ENCODE measurements at regions of chr6 and their contacts with region 1.

Region 1: DNA sequence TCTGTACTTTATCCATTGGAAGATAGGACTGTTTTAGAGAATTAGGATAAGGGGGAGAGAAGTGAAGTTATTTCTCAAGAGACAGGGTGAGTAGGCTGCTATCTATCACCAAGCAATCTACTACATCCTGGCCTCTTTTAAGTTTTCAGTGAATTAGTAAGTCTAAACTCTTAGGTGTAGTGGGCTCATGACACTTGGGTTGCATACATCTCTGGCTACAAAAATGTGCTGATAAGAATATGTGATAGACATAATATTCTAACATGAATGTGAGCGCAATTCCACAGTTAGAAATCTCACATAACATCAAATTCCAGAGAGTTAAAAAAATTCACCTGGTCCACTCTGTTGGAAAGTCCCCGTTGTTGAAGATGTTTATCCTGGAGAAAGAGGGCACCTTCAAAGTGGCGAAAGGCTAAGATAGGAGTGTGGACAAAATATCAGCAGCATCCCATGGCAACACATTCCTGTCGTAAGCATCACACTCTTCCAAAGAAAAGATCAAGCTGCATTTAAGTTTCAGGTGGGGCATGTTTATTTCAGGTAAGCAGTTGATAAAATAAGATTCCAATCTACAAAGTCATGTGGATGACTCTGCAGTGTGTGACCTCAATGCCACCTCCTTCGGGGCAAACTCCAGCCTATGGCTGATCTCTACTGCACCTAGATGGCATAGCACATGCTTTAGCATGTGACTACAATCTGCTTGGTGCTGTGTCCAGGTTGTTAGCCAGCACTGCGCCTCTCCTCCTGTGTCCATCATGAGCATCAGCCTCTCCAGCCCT is 111.7 kb upstream of the NEDD9 start:
- DNase-seq: no peak
- H3K4me3 Mint-ChIP-seq: peak overlapping the region; percentile 2
- H3K27ac Mint-ChIP-seq: peak overlapping the region; percentile 70
- H3K4me1 Mint-ChIP-seq: peaks cover 81% of the 10 kb centered on the region
- H3K27me3 Mint-ChIP-seq: no peaks in the 10 kb centered on the region

Region 2: GRCh38 chr6:11212625-11213024 is 131.5 kb before region 1 on chr6:
- intact Hi-C with region 1: no loop called
- DNase-seq: no peak
- H3K4me3 Mint-ChIP-seq: no peak overlapping the region
- H3K27ac Mint-ChIP-seq: no peak overlapping the region
- H3K4me1 Mint-ChIP-seq: peaks cover 46% of the 10 kb centered on the region
- H3K27me3 Mint-ChIP-seq: no peaks in the 10 kb centered on the region

Region 3: DNA sequence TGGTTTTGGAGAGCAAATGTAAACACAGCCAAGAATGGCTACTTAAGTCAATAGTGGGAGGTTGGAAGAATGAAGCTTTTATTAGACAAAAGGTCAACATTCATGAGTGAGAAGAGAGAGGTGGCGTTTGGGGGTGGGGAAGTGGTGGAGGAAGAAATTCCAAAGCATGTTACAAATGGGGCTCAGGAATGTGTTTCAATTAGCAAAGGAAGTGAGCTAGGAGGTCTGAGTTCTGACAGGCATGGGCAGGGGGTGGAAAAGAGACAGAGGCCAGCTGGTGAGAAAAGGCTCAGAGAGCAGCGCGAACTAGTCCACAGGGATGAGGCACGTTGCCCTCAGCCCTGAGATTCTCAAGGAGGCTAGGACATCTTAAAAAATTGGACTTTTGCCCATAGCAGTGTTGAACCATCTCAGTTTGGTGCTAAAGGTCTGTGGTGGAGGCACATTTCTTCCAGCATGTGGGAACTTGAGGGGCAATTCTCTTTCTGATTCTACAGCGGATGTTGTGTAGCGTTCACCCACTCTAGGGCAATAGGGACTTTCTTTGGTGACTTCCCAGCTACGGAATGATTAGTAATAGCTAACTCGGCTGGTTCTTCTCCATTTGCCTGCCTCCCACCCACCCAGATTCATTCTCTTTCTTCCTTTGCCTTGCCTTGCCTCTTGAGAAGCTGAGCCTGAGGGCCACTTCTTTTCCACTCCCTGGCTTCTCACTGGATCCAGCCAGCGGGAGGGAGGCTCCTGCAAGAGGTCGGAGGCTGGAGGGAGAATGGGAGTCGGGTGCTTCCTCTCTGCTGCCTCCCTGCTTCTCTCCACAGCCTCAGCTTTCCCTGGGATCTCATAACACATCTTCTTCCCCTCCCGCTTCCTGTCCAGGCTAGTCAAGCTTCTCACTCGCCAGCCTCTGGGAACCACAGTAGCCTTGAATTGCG is 66.6 kb before region 1 on chr6:
- intact Hi-C with region 1: loop called (anchors 1 kb)
- DNase-seq: no peak
- H3K4me3 Mint-ChIP-seq: peak overlapping the region; percentile 31
- H3K27ac Mint-ChIP-seq: peak overlapping the region; percentile 89
- H3K4me1 Mint-ChIP-seq: peaks cover 37% of the 10 kb centered on the region
- H3K27me3 Mint-ChIP-seq: no peaks in the 10 kb centered on the region

Region 4: DNA sequence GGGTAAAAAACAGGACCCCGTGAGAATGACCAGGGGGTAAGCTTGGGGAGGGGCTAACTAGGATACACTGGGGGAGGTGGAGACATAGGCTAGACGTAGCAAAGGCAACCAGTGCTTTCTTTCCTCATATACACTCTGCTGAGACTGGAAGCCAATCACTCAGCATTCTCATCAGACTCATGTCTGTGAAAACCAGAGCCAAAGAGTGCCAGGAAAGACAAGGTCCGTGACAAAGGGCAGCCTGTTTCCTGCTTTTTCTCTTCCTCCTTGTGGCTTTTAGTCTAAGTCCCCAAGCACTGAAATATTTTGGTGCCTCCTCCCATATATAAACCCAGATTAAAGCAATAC is 13.8 kb before region 1 on chr6:
- intact Hi-C with region 1: loop called (anchors 1 kb)
- DNase-seq: no peak
- H3K4me3 Mint-ChIP-seq: peak overlapping the region; percentile 46
- H3K27ac Mint-ChIP-seq: peak overlapping the region; percentile 88
- H3K4me1 Mint-ChIP-seq: peaks cover 72% of the 10 kb centered on the region
- H3K27me3 Mint-ChIP-seq: no peaks in the 10 kb centered on the region

Region 5: DNA sequence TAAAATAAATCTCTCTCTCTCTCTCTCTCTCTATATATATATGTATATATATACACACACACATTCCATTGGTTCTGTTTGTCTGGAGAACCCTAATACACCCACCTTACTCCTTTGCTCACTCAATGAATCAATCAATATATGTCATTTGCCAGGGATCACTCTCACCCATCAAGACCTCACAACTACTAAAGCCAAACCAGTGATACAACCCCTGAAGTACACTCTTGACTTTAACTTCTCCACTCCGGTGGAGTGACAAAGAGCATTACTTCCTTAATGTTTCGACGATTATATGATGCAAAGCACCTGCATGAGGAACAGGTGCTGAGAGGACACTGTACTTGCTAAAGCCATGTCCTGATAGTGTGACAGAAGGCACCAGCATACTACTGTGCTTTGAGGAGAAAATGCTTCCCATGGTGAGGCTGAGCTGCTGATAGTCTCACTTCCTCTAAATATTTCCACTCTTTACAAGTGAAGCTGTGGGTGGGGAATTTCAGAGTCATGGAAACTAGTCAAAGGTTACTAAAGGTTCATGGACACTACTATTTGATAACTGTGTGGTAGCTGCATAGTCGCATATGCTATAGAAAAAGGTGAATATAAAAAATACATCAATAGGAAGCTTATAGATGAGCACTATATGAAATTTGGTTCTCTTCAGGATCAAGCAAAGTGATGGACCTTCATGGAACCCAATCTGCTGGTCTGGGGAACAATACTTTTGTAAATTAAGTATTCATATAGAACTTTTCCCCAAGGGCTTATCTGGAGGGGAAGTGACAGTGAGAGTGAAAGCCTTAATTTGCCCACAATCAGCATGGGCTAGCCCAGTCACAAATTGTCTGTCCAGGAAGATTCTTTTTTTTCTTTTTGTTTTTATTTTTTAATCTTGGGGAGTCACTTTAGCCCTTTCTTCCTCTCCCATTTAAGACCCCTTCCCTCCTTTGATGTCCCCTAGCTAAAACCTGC is 30.2 kb after region 1 on chr6:
- intact Hi-C with region 1: loop called (anchors 2 kb)
- DNase-seq: peak; percentile 67
- H3K4me3 Mint-ChIP-seq: peak overlapping the region; percentile 58
- H3K27ac Mint-ChIP-seq: peak overlapping the region; percentile 80
- H3K4me1 Mint-ChIP-seq: peaks cover 56% of the 10 kb centered on the region
- H3K27me3 Mint-ChIP-seq: no peaks in the 10 kb centered on the region

Measured in activated CD4-positive, alpha-beta T cell treated with anti-CD3 and anti-CD28 coated beads, Interleukin-2, amount 10 ng/mL, durations not matched to agents 24 days and 14 days (primary cell).